CD4-positive, alpha-beta memory T cell (primary cell): ENCODE measurements at regions of chr22 and their contacts with region 1.

Region 1: DNA sequence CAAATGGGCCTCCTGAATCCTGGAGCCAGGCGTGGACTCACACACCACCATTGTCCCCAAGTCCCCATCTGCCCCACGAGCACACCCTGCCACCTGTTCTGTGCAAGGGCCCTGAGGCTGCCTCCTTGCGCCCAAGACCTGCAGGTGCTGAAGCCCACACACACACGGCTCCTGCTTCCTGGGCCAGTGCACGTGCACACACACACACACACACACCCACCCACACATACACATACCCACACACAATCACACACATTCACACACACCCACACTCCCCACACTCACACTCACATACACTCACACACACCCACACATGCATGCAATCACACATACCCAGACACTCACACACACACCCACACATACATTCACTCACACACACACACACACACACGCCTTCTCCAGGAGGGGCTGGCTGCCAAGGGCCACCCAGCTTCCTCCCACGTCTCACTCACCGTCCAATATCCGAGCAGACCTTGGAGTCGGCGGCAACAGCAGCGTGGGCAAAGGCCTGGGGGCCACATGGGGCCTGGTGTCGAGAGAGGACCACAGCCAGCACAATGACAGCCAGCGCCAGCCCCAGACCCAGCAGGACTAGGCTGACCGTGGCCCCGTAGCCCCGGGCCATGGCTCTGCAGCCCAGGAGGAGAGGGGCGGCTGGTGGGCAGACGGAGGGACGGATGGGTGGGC is 638 bp downstream of the GGT5 start:
- DNase-seq: no peak
- H3K4me3 ChIP-seq: no peak overlapping the region
- H3K4me3 Mint-ChIP-seq: peak overlapping the region in 4 of 8 donors; percentile 10 to 61 (median 52)
- H3K27ac ChIP-seq: no peak overlapping the region
- H3K27ac Mint-ChIP-seq: peak overlapping the region in 2 of 7 donors; percentile 15 to 79
- H3K4me1 ChIP-seq: peaks cover 25% of the 10 kb centered on the region
- H3K4me1 Mint-ChIP-seq: peaks cover 15 to 42% (median 27%) of the 10 kb centered on the region in 4 donors
- H3K27me3 ChIP-seq: no peaks in the 10 kb centered on the region
- H3K27me3 Mint-ChIP-seq: no peaks in the 10 kb centered on the region

Region 2: DNA sequence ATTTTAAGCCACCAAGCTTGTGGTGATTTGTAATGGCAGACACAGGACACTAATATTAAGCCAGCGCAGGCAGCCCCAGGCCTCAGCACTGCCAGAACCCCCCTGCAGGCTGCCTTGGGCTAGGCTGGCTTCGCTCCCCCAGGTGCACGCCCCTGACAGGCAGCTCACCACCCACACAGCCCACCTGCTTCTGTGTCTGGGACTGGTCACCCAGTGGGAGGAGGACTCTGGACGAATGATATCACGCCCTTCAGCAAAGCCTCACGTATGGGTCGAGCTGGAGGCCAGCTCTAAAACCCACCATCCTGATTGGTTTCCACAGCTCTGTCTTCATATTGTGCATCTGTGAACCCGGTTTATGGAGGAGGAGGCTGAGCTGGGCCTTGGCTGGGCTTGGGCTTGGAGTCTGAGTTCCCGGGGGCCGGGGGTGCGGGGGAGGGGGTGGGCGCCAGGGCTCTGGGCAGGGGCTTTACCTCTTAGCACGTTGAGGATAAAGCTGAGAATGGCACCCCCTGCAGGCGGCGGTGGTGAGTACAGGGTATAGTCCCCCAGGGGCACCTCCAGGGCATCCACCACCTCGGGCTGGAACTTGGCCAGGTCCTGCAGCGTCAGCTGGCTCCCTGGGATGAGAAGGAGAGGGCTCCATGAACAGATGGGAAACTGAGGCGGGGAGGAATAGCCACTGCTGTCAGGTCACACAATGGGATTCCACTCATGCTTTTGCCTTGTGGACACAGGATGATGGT is 13.2 kb before region 1 on chr22:
- CTCF ChIA-PET with region 1: interaction called, 15 read pairs
- POLR2A ChIA-PET with region 1: interaction called, 3 read pairs
- intact Hi-C with region 1: no loop called
- DNase-seq: peak; percentile 38 to 48 (median 39)
- H3K4me3 ChIP-seq: no peak overlapping the region
- H3K4me3 Mint-ChIP-seq: no peak overlapping the region
- H3K27ac ChIP-seq: no peak overlapping the region
- H3K27ac Mint-ChIP-seq: no peak overlapping the region
- H3K4me1 ChIP-seq: no peaks in the 10 kb centered on the region
- H3K4me1 Mint-ChIP-seq: no peaks in the 10 kb centered on the region
- H3K27me3 ChIP-seq: no peaks in the 10 kb centered on the region
- H3K27me3 Mint-ChIP-seq: peaks cover 0 to 2% of the 10 kb centered on the region in 2 donors

Region 3: GRCh38 chr22:24723111-24723510 is 478.9 kb after region 1 on chr22:
- CTCF ChIA-PET with region 1: no interaction called
- POLR2A ChIA-PET with region 1: no interaction called
- intact Hi-C with region 1: no loop called
- DNase-seq: no peak
- H3K4me3 ChIP-seq: no peak overlapping the region
- H3K4me3 Mint-ChIP-seq: no peak overlapping the region
- H3K27ac ChIP-seq: no peak overlapping the region
- H3K27ac Mint-ChIP-seq: no peak overlapping the region
- H3K4me1 ChIP-seq: no peaks in the 10 kb centered on the region
- H3K4me1 Mint-ChIP-seq: no peaks in the 10 kb centered on the region
- H3K27me3 ChIP-seq: no peaks in the 10 kb centered on the region
- H3K27me3 Mint-ChIP-seq: peaks cover 19 to 24% of the 10 kb centered on the region in 2 donors